Activated naive CD8-positive, alpha-beta T cell treated with anti-CD3 and anti-CD28 coated beads, Interleukin-2, amount 10 ng/mL, durations not matched to agents 7 days and 5 days (primary cell): ENCODE measurements at regions of chr22 and their contacts with region 1.

Region 1: GRCh38 chr22:41070665-41071331 is 21.6 kb upstream of the EP300 start:
- DNase-seq: no peak
- ATAC-seq: no peak
- H3K4me3 Mint-ChIP-seq: no peak overlapping the region
- H3K27ac Mint-ChIP-seq: no peak overlapping the region
- H3K4me1 Mint-ChIP-seq: peaks cover 7% of the 10 kb centered on the region
- H3K27me3 Mint-ChIP-seq: no peaks in the 10 kb centered on the region

Region 2: GRCh38 chr22:41022470-41023298 is 48.1 kb before region 1 on chr22:
- POLR2A ChIA-PET with region 1: interaction called, 12 read pairs
- DNase-seq: peak; percentile 87
- ATAC-seq: peak; percentile 68
- H3K4me3 Mint-ChIP-seq: peak overlapping the region; percentile 82
- H3K27ac Mint-ChIP-seq: peak overlapping the region; percentile 79
- H3K4me1 Mint-ChIP-seq: peaks cover 11% of the 10 kb centered on the region
- H3K27me3 Mint-ChIP-seq: peaks cover 15% of the 10 kb centered on the region